Activated CD4-positive, alpha-beta T cell treated with anti-CD3 and anti-CD28 coated beads, Interleukin-2, amount 10 ng/mL, durations not matched to agents 24 days and 14 days (primary cell): ENCODE measurements at regions of chr19 and their contacts with region 1.

Region 1: GRCh38 chr19:36489118-36489919 is at the start of gene ZNF566:
- DNase-seq: peak; percentile 97
- H3K4me3 Mint-ChIP-seq: peak within 1 kb of the TSS; percentile 99
- H3K27ac Mint-ChIP-seq: peak within 1 kb of the TSS; percentile 99
- H3K4me1 Mint-ChIP-seq: peaks cover 23% of the 10 kb centered on the region
- H3K27me3 Mint-ChIP-seq: no peaks in the 10 kb centered on the region
- total RNA-seq, gene ZNF566: 7.2 and 8.5 TPM in 2 replicates

Region 2: GRCh38 chr19:36132489-36132891 is 356.8 kb before region 1 on chr19:
- intact Hi-C with region 1: loop called (anchors 5 kb)
- DNase-seq: peak; percentile 76
- H3K4me3 Mint-ChIP-seq: peak overlapping the region; percentile 24
- H3K27ac Mint-ChIP-seq: peak overlapping the region; percentile 54
- H3K4me1 Mint-ChIP-seq: peaks cover 25% of the 10 kb centered on the region
- H3K27me3 Mint-ChIP-seq: no peaks in the 10 kb centered on the region

Region 3: GRCh38 chr19:36196249-36196648 is 293.1 kb before region 1 on chr19:
- intact Hi-C with region 1: no loop called
- DNase-seq: no peak
- H3K4me3 Mint-ChIP-seq: no peak overlapping the region
- H3K27ac Mint-ChIP-seq: no peak overlapping the region
- H3K4me1 Mint-ChIP-seq: no peaks in the 10 kb centered on the region
- H3K27me3 Mint-ChIP-seq: no peaks in the 10 kb centered on the region

Region 4: DNA sequence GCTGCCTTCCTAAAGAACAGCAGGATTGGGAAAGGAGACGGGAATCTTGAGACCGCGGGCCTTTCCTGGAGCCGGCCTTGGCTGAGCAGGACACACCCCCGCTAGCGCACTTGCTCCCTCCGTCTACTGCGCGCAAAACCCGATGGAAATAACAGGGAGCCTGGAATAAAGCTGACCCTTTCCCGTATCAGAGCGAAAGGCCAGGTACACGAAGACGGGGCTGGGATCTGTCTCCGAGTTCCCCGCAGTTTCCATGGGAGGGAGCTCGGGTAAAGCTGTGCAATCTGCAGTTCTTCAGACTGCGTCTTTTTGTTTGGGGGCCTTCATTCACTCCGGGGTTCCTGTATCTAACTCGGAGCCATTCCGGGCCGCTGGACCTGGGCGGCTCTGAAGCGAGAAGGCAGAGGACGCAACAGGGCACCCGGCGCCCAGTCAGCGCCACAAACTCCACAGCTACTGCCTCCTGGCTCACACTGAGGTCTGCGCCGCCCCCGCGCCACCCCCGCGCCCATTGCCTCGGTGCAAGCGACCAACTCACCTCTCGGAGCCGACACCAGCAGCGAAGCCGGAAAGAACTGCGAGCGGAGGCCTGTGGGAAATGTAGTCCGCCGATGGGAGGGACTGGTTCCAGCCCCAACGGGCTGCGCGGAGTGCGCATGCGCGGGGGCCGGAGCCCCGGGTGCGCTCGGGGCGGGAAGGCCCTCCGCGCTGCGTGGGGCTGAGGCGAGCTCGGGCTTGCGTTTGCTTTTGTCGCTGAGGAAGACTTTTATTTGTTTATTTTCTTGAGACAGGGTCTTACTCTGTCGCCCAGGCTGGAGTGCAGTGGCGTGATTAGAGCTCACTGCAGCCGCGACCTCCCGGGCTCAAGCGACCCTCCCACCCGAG is 110.5 kb before region 1 on chr19 and contains the start of gene ZFP14:
- intact Hi-C with region 1: loop called (anchors 1 kb)
- DNase-seq: peak; percentile 98
- H3K4me3 Mint-ChIP-seq: peak within 1 kb of the TSS; percentile 84
- H3K27ac Mint-ChIP-seq: peak within 1 kb of the TSS; percentile 90
- H3K4me1 Mint-ChIP-seq: peaks cover 14% of the 10 kb centered on the region
- H3K27me3 Mint-ChIP-seq: no peaks in the 10 kb centered on the region
- total RNA-seq, gene ZFP14: 2.2 and 3.2 TPM in 2 replicates

Region 5: DNA sequence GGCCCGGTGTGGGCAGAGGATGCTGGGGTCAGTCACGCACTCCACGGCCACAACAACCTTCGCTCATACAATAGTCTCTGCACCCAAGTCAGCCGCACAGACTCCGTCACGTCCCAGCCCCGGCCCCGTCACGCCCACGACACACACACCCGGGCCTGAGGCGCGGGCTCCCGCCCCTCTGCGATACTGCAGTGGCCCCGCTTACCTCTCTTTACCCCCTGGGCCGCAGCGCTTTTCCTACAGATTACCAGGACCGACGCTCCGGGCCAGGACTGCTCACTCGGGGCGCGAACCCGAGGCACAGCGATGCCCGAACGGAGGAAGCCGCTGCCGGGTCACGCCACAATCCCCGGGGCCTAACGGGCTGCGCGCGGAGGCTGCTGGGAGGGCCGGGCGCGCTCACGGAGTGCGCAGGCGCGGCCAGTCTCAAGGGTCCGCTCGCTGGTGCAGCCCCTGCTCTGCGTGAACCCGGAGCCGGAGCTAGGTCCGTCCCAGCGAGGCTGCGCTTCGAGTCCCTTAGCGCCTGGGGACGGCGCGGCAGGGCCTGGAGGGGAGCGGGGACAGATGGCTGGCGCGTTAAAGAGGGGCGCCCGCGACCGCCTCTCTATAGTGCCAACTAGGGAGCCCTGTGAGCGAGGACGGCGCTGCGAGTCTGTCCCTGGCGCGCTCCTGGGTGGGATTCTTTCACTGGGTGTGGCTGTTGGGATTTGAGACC is 70.9 kb before region 1 on chr19 and contains the start of gene ZFP82:
- intact Hi-C with region 1: loop called (anchors 1 kb)
- DNase-seq: peak; percentile 93
- H3K4me3 Mint-ChIP-seq: peak within 1 kb of the TSS; percentile 96
- H3K27ac Mint-ChIP-seq: peak within 1 kb of the TSS; percentile 97
- H3K4me1 Mint-ChIP-seq: peaks cover 14% of the 10 kb centered on the region
- H3K27me3 Mint-ChIP-seq: peaks cover 6% of the 10 kb centered on the region
- total RNA-seq, gene ZFP82: 4.4 and 4.8 TPM in 2 replicates

Region 6: GRCh38 chr19:36573020-36573885 is 83.9 kb after region 1 on chr19 and contains the start of gene ZNF529:
- intact Hi-C with region 1: loop called (anchors 1 kb)
- DNase-seq: peak; percentile 97
- H3K4me3 Mint-ChIP-seq: peak within 1 kb of the TSS; percentile 89
- H3K27ac Mint-ChIP-seq: peak within 1 kb of the TSS; percentile 95
- H3K4me1 Mint-ChIP-seq: peaks cover 24% of the 10 kb centered on the region
- H3K27me3 Mint-ChIP-seq: no peaks in the 10 kb centered on the region
- total RNA-seq, gene ZNF529: 16.8 and 17.6 TPM in 2 replicates

Region 7: DNA sequence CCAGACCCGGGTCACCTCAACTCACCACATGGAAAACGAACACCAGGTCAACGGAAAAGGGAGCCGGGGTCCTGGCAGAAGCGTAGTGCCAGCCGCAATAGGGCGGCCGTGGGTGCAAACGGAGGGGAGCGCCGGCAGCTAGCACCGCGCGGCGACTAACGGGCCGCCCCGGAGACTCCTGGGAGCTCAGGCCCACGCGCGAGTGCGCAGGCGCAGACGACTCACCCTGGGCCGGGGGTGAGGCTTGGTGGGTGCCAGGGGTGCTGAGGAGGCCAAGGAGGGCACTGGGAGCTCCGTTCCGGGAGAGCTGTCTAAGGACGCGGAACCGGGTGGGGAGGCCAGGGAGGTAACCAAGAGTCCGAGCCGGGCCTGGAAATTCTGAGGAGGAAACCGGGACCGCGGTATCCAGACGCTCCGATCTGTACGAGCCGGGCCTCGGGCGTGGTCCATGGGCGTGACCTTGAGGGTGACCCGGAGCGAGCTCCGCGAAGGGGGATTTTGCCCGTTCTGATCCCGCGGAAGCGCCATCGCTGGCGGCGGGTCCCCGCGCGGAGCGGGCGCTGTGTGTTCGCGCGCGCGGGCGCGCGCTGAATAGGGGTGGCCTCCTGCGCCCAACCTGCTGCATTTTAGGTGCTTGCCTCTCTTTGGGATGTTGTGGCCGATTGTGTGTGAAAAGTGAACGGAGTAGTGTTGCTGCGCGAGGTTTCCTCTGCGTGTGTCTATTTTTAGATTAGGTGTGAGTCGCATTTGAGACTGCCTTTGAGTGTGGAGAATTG is 116.0 kb after region 1 on chr19 and contains the start of gene ZNF382:
- intact Hi-C with region 1: loop called (anchors 1 kb)
- DNase-seq: peak; percentile 96
- H3K4me3 Mint-ChIP-seq: peak within 1 kb of the TSS; percentile 89
- H3K27ac Mint-ChIP-seq: peak within 1 kb of the TSS; percentile 98
- H3K4me1 Mint-ChIP-seq: peaks cover 22% of the 10 kb centered on the region
- H3K27me3 Mint-ChIP-seq: no peaks in the 10 kb centered on the region
- total RNA-seq, gene ZNF382: 9.5 and 13.2 TPM in 2 replicates